RWPE1 (cell line): ENCODE measurements at regions of chr17 and their contacts with region 1.

Region 1: DNA sequence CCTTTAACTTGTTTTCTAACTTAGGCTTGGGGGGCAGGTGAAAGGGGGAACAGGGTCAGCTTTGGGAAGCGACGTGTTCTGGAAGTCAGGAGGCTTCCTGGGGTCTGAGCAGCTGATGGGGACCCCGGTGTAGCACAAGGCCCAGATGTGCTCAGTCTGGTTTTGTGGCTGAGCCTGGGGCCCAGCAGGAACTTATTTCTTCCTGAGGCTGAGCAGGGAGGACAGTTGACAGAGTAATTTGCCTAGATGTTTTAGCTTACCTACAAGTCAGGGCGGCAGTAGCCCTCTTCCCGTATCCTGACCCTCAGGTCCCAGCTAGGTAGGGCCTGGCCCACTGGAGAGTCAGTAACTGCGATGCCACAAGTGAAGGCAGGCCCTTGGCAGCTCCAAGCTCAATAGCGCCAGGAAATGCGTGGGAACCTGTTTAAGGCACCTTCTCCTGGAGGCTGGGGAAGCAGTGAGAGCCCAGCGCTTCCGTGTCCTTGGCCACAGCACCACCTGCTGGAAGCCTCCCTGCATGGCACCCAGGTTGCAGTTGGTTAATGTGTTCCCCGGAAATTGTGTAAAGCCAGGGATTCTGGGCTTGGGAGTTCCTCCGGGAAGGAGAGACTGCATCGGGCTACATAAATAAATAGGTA is 5.2 kb downstream of the CCR7 start:
- DNase-seq: peak; percentile 98
- H3K27ac ChIP-seq: peak overlapping the region; percentile 88
- CTCF ChIP-seq: peak; percentile 95

Region 2: DNA sequence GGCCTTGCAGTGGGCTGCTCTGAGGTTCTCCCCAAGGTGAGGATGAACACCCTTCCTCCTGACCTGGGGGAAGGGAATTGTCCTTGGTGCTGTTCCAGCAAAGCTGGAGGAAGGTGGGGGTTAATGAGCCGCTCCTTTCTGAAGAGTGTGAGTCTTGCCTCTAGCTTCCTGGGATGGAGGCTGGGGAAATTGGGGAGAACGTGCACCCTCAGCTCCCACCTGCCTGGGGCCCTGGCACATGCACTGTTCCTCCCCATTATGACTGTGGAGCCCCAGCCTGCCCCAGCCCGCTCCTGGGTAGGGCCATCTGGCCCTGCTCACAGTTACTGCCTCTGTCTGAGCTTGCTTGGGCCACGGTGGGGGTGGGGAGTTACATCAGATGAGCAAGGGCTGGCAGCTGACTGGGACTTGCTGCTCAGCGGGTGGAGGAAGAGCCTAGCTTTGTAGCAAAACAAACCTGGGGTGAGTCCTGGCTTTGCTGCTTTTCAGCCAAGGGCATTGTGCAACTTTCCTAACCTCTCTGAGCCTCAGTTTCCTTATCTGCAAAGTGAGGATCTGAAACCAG is 69.7 kb before region 1 on chr17:
- CTCF ChIA-PET with region 1: interaction called, 12 read pairs
- POLR2A ChIA-PET with region 1: interaction called, 6 read pairs
- DNase-seq: peak; percentile 75
- H3K27ac ChIP-seq: peak overlapping the region; percentile 100
- CTCF ChIP-seq: no peak

Region 3: GRCh38 chr17:40499551-40500174 is 60.4 kb before region 1 on chr17:
- CTCF ChIA-PET with region 1: interaction called, 12 read pairs
- POLR2A ChIA-PET with region 1: interaction called, 3 read pairs
- DNase-seq: no peak
- H3K27ac ChIP-seq: peak overlapping the region; percentile 100
- CTCF ChIP-seq: no peak

Region 4: DNA sequence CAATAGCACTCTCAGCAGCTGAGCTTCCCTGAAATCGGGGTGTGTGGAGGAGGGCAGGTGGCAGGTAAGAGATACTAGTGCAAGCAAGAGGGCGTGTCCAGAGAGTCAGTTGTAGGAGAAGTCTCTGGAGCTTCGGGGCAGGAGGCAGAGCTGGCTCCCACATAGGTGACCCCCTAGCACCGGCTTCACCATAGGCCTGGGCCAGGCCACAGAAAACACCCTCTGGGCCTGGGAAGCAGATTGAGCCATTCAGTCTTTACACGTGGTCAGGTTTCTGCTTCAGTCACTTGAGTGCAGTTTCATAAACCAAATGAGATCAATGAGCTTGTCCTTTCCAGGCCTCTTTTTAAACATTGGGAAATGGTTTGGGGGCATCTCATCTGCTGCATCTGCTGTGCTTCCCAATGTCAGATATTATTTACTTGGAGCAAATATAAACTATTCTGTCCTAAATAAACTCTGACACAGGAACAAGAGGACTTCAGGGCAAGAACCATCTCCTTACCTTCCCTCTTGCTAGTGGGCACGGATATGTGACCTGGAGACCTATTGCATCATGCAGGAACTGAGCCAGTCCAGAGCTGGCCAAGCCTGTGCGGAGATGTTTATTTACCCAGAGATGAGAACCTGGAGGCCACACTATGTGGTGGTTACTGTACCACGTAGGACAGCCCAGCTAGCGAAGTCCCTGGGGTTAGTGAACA is 10.9 kb before region 1 on chr17:
- CTCF ChIA-PET with region 1: interaction called, 28 read pairs
- POLR2A ChIA-PET with region 1: no interaction called
- DNase-seq: no peak
- H3K27ac ChIP-seq: peak overlapping the region; percentile 94
- CTCF ChIP-seq: no peak